Activated CD4-positive, alpha-beta T cell treated with anti-CD3 and anti-CD28 coated beads for 36 hours (primary cell): ENCODE measurements at regions of chr3 and their contacts with region 1.

Region 1: DNA sequence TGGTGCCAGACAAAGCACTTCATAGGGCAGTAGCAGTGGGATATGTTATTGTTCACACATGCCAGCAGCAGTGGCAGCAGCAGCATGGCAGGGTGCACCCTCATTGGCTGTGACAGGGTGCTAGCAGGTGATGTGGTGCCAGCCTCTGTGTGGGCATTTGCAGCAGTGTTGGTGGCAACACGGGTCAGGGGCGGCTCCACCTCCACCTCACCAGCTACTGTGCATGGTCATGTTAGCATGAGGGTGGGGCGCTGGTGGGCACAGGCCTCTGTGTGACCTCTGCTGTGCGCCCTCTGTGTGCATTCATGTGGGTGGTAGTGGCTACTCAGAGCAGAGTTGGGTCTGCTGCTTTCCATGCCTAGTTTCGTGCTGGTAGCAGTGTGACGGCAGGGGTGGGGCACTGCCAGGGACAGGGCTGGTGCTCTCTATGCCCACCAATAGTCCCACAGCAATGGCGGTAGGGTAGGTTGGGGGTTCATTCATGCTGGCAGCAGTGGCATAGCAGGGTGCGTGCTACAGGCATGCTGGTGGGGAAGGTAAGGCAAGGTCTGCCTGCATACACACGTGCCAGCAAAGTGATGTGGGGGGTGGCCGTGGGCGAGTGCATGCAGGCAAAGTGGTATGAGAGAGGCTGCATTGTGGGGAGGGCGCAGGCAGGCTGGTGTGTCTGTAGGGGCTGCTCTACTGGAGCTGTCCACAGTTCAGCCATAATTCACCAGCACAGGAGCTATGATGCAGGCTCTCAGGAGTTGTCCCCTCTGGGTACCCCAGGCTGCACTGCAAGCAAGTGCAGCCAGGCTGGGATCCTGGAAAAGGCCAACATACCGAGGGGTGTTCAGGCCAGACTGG is 402.7 kb downstream of the GRM7 start:
- DNase-seq: no peak
- ATAC-seq: no peak
- H3K4me3 Mint-ChIP-seq: no peak overlapping the region
- H3K27ac Mint-ChIP-seq: no peak overlapping the region
- H3K4me1 Mint-ChIP-seq: no peaks in the 10 kb centered on the region
- H3K27me3 Mint-ChIP-seq: no peaks in the 10 kb centered on the region

Region 2: DNA sequence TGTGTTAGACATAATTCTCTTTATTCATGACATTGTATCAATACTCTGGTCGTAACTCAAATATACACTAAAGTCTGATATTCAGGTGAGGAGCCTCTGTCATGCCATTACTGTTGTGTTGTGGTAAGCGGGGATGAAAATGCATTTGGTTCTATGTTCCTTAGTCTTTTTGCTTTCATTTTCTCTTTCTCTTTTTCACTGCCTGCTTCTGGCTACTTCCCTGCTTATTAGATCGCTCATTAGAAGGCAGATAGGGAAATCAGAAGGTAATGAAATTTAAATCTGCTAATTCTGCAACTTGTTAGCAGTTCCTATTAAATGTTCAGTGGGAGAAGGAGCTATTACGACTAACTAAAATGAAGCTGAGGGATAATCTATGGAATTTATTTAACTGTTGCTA is 57.6 kb before region 1 on chr3:
- CTCF ChIA-PET with region 1: no interaction called
- POLR2A ChIA-PET with region 1: no interaction called
- intact Hi-C with region 1: loop called in 1 of 2 experiments (anchors 10 kb)
- DNase-seq: no peak
- ATAC-seq: no peak
- H3K4me3 Mint-ChIP-seq: no peak overlapping the region
- H3K27ac Mint-ChIP-seq: no peak overlapping the region
- H3K4me1 Mint-ChIP-seq: peaks cover 4% of the 10 kb centered on the region
- H3K27me3 Mint-ChIP-seq: peaks cover 4% of the 10 kb centered on the region